Naive thymus-derived CD8-positive, alpha-beta T cell (primary cell): ENCODE measurements at regions of chr10 and their contacts with region 1.

Region 1: GRCh38 chr10:73772280-73773151 is 9.3 kb upstream of the CHCHD1 start:
- DNase-seq: peak; percentile 67 to 89 (median 77)
- ATAC-seq: peak; percentile 72 to 75
- H3K4me3 Mint-ChIP-seq: peak overlapping the region; percentile 92 to 97 (median 96)
- H3K27ac Mint-ChIP-seq: peak overlapping the region; percentile 84 to 97 (median 94)
- H3K4me1 Mint-ChIP-seq: peaks cover 34 to 66% (median 53%) of the 10 kb centered on the region in 4 donors
- H3K27me3 Mint-ChIP-seq: no peaks in the 10 kb centered on the region

Region 2: GRCh38 chr10:73644015-73644743 is 128.3 kb before region 1 on chr10:
- POLR2A ChIA-PET with region 1: no interaction called
- DNase-seq: peak in 9 of 10 donors; percentile 19 to 71 (median 53)
- ATAC-seq: peak; percentile 72 to 73
- H3K4me3 Mint-ChIP-seq: peak overlapping the region in 4 of 10 donors; percentile 0 to 53 (median 14)
- H3K27ac Mint-ChIP-seq: peak overlapping the region in 1 of 10 donors; percentile 14
- H3K4me1 Mint-ChIP-seq: peaks cover 4 to 13% (median 6%) of the 10 kb centered on the region in 4 donors
- H3K27me3 Mint-ChIP-seq: peaks cover 0 to 12% (median 4%) of the 10 kb centered on the region in 5 donors

Region 3: DNA sequence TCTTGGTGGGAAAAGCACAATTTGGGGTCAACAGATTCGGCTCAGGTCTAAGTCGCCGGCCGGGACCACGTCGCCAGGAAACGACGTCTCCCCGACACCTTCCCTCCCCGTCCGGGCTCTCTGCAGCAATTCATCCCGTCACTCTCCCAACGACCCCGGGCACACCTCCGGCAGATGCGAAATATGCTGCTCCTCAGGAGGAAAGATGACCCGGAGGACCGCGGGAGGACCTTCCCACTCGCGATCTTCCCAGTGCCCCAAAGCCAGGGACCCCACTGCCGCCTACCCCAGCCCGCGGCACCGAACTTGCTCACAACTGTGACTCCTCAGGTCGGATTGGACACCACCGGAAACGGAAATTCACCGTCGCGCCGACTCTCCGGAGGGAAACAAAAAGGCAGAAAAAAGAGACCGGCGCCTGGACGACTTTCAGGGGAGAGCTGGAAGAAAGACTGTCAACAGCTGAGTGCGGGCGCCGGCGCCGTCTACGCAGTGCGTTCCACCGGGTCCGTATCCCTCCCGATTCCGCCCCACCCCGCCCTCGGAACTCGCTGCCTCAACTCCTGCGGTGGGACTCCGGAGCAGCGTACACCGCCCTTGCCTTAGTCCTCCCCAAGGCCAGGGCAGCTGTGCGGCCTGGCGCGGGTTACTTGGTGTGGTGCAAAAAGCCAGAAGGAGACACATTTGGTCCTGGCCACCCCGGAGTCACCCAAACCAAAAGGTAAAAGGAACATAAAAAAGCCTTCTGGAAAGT is 42.2 kb before region 1 on chr10:
- POLR2A ChIA-PET with region 1: interaction called, 24 read pairs
- DNase-seq: peak; percentile 70 to 95 (median 89)
- ATAC-seq: peak; percentile 90 to 93
- H3K4me3 Mint-ChIP-seq: peak overlapping the region; percentile 94 to 100 (median 98)
- H3K27ac Mint-ChIP-seq: peak overlapping the region; percentile 94 to 99 (median 97)
- H3K4me1 Mint-ChIP-seq: peaks cover 9 to 24% (median 16%) of the 10 kb centered on the region in 4 donors
- H3K27me3 Mint-ChIP-seq: no peaks in the 10 kb centered on the region

Region 4: DNA sequence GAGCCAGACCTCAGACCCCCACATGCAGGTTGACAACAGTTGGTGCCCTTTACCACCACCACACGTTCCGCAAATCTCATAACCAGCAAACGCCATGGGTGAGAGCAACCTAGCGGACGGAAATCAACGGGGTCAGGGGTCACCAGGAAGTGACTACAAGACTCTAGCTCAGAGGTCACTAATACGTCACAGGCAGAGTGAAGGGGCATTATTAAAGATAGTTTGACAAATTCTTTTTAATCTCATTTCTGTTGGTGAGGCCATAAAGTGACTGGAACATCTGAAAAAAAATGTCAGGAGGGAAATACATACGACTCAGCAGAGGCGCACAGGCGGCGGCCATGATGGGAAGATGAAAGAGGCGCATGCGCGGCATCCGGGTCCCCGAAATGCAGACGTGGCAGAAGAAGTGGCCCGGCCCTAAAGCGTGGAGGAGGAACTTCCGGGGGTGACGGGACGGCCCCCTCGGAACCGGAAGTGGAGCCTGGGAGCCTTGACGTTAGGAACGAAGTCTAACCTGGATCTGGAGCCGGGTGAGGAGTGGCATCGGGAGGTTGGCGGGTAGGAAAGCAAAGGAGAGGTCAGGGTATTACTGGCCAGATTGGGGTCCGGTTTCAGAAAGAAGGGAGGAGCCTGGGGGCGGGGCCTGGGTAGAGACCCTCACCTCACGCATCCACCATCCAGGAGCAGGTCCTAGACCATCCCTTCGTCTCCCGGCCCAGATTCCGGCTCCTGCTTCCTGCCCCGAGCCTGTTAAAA is 28.4 kb before region 1 on chr10 and contains the start of gene SEC24C:
- POLR2A ChIA-PET with region 1: interaction called, 20 read pairs
- DNase-seq: peak; percentile 87 to 97 (median 95)
- ATAC-seq: peak; percentile 90 to 95
- H3K4me3 Mint-ChIP-seq: peak within 1 kb of the TSS; percentile 91 to 100 (median 100)
- H3K27ac Mint-ChIP-seq: peak within 1 kb of the TSS; percentile 99 to 100 (median 100)
- H3K4me1 Mint-ChIP-seq: peaks cover 15 to 46% (median 40%) of the 10 kb centered on the region in 4 donors
- H3K27me3 Mint-ChIP-seq: no peaks in the 10 kb centered on the region
- polyA plus RNA-seq, gene SEC24C: 18.9 to 33.5 (median 25.9) TPM

Region 5: GRCh38 chr10:73785221-73785720 is 12.8 kb after region 1 on chr10 and contains the start of gene ZSWIM8:
- POLR2A ChIA-PET with region 1: interaction called, 169 read pairs
- DNase-seq: peak; percentile 76 to 92 (median 86)
- ATAC-seq: peak; percentile 81 to 83
- H3K4me3 Mint-ChIP-seq: peak within 1 kb of the TSS; percentile 89 to 100 (median 98)
- H3K27ac Mint-ChIP-seq: peak within 1 kb of the TSS; percentile 97 to 99 (median 98)
- H3K4me1 Mint-ChIP-seq: peaks cover 28 to 67% (median 56%) of the 10 kb centered on the region in 4 donors
- H3K27me3 Mint-ChIP-seq: no peaks in the 10 kb centered on the region
- polyA plus RNA-seq, gene ZSWIM8: 12.3 to 18.5 (median 13.4) TPM

Region 6: DNA sequence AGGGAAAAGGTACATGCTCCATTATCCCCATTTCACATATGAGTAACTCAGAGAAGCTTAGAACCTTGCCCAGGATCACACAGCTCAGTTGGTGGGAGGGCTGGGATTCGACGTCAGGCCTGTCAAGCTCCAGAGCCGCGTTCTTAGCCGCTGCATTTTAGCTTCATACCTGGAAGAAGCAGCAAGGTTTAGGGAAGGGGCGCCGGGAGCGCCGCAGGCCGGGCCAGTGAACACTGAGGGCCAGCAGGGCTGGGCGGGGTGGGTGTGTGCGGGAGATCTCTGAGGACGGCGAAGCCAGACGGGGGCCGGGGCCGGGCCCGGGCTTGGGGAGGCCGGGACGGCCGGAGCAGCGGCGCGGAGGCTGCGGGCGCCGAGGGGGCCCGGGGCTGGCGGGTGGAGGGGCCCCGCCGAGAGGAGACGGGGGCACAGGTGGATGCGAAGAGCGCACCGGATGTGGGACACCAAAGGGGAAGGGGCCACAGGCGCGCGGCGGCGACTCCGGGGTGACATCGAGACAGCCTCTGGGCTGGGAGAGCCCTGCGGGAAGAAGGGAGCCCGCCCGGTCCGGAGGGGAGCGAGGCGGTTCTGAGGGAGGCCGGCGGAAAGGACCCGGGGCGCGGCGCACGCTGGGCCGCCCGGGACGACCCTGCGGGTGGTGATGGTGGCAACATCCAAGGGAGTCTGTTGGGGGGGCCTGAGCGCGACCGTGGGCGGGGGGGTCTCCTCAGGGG is 38.4 kb after region 1 on chr10:
- POLR2A ChIA-PET with region 1: interaction called, 38 read pairs
- DNase-seq: peak; percentile 21 to 81 (median 56)
- ATAC-seq: peak; percentile 29 to 45
- H3K4me3 Mint-ChIP-seq: peak overlapping the region; percentile 84 to 93 (median 89)
- H3K27ac Mint-ChIP-seq: peak overlapping the region; percentile 82 to 97 (median 95)
- H3K4me1 Mint-ChIP-seq: peaks cover 24 to 55% (median 46%) of the 10 kb centered on the region in 4 donors
- H3K27me3 Mint-ChIP-seq: no peaks in the 10 kb centered on the region

Region 7: GRCh38 chr10:73874267-73875138 is 102.0 kb after region 1 on chr10 and contains the start of gene CAMK2G:
- POLR2A ChIA-PET with region 1: interaction called, 15 read pairs
- DNase-seq: peak; percentile 75 to 92 (median 78)
- ATAC-seq: peak; percentile 75 to 82
- H3K4me3 Mint-ChIP-seq: peak within 1 kb of the TSS; percentile 87 to 97 (median 94)
- H3K27ac Mint-ChIP-seq: peak within 1 kb of the TSS; percentile 86 to 97 (median 95)
- H3K4me1 Mint-ChIP-seq: peaks cover 46 to 75% (median 73%) of the 10 kb centered on the region in 4 donors
- H3K27me3 Mint-ChIP-seq: no peaks in the 10 kb centered on the region
- polyA plus RNA-seq, gene CAMK2G: 4.6 to 6.7 (median 5.1) TPM